ENCODE measurements at regions of chr1 and their contacts with region 1.

Region 1: GRCh38 chr1:209860293-209860881 is 32.6 kb downstream of the UTP25 start:
- DNase-seq: peak; percentile 77 to 91 (median 86)
- H3K4me3 ChIP-seq: no peak overlapping the region
- H3K27ac ChIP-seq: peak overlapping the region in 23 of 59 donors; percentile 1 to 78 (median 46)
- H3K27me3 ChIP-seq: peaks cover 0 to 3% (median 0%) of the 10 kb centered on the region in 45 donors
- CTCF ChIP-seq: peak; percentile 88 to 99 (median 96)

Region 2: DNA sequence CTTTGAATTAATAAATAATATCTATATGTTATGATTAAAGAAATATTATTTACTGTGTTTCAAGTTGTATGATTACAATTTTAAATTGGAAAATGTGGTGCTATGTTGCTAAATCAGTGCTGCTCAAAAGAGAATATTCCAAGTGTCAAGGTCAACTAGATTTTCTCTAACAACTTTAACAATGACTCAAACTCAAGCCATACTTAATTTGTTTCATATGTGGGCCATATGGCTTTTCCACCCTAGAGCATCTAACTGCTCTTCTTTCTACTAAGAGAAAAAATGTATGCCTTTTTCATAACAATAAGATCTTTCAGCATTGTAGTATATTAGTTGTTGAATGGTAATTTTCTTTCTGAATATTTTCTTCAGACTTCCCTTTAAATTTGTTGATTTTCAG is 69.4 kb after region 1 on chr1:
- intact Hi-C with region 1: no loop called
- DNase-seq: no peak
- H3K4me3 ChIP-seq: no peak overlapping the region
- H3K27ac ChIP-seq: no peak overlapping the region
- H3K27me3 ChIP-seq: no peaks in the 10 kb centered on the region
- CTCF ChIP-seq: no peak

Region 3: GRCh38 chr1:209983953-209984352 is 123.6 kb after region 1 on chr1:
- intact Hi-C with region 1: loop called (anchors 2 kb)
- DNase-seq: peak in 1 of 10 donors; percentile 52
- H3K4me3 ChIP-seq: no peak overlapping the region
- H3K27ac ChIP-seq: peak overlapping the region in 7 of 59 donors; percentile 0 to 59 (median 6)
- H3K27me3 ChIP-seq: no peaks in the 10 kb centered on the region
- CTCF ChIP-seq: no peak

Region 4: DNA sequence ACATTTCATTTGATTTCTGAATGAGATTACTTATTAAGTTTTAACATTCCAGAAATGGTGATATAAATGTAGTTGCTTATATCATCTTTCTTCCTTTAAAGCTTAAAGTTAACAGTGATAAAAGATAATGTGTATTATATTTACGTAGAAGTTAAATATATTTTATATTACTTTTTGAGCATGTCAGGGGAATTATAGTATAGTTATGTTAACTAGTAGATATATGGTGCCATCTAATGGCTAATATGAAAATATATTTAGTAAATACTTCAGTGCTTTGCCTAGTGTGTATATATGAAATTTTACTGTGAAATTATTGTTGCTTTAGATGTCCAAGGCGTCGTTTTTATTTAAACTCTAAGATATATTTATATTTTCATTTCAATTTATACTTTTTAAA is 129.1 kb after region 1 on chr1:
- intact Hi-C with region 1: loop called in 1 of 2 experiments (anchors 2 kb)
- DNase-seq: no peak
- H3K4me3 ChIP-seq: no peak overlapping the region
- H3K27ac ChIP-seq: no peak overlapping the region
- H3K27me3 ChIP-seq: no peaks in the 10 kb centered on the region
- CTCF ChIP-seq: peak in 55 of 56 donors; percentile 28 to 86 (median 61)